ENCODE measurements at regions of chr10 and their contacts with region 1.

Region 1: GRCh38 chr10:530717-531116 is 158.8 kb downstream of the DIP2C start:
- DNase-seq: peak in 4 of 14 experiments; percentile 17 to 39 (median 21)
- ATAC-seq: no peak
- H3K4me3 ChIP-seq: no peak overlapping the region
- H3K4me3 Mint-ChIP-seq: no peak overlapping the region
- H3K27ac ChIP-seq: no peak overlapping the region
- H3K27ac Mint-ChIP-seq: no peak overlapping the region
- H3K4me1 ChIP-seq: no peaks in the 10 kb centered on the region
- H3K4me1 Mint-ChIP-seq: no peaks in the 10 kb centered on the region
- H3K27me3 ChIP-seq: no peaks in the 10 kb centered on the region
- H3K27me3 Mint-ChIP-seq: peaks cover 7% of the 10 kb centered on the region
- CTCF ChIP-seq: no peak

Region 2: GRCh38 chr10:176677-177076 is 354.0 kb before region 1 on chr10:
- CTCF ChIA-PET with region 1: no interaction called
- POLR2A ChIA-PET with region 1: no interaction called
- intact Hi-C with region 1: loop called in 1 of 2 experiments (anchors 2 kb)
- DNase-seq: no peak
- ATAC-seq: no peak
- H3K4me3 ChIP-seq: no peak overlapping the region
- H3K4me3 Mint-ChIP-seq: no peak overlapping the region
- H3K27ac ChIP-seq: no peak overlapping the region
- H3K27ac Mint-ChIP-seq: peak overlapping the region; percentile 5
- H3K4me1 ChIP-seq: no peaks in the 10 kb centered on the region
- H3K4me1 Mint-ChIP-seq: peaks cover 10% of the 10 kb centered on the region
- H3K27me3 ChIP-seq: no peaks in the 10 kb centered on the region
- H3K27me3 Mint-ChIP-seq: no peaks in the 10 kb centered on the region
- CTCF ChIP-seq: no peak

Region 3: DNA sequence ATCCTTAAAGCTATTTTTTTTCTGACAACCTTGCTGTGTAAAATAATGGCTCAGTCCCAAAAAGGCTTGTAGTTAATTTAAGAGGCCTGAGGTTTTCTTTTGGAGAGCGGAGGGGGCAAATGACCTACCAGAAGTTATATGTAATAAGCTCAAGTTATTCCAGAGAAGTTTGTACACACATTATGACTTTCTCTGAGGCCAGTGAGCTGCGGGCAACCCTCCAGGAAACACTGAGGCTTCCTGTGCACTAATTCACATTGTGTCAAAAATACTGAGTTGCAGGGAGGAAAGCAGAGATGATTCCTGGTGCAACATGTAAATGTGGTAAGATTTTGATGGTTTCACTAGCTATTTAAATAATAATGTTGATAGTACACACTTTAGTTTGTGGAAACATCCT is 29.8 kb before region 1 on chr10:
- CTCF ChIA-PET with region 1: no interaction called
- POLR2A ChIA-PET with region 1: no interaction called
- intact Hi-C with region 1: no loop called
- DNase-seq: peak in 3 of 14 experiments; percentile 11 to 43 (median 22)
- ATAC-seq: no peak
- H3K4me3 ChIP-seq: no peak overlapping the region
- H3K4me3 Mint-ChIP-seq: peak overlapping the region; percentile 54
- H3K27ac ChIP-seq: no peak overlapping the region
- H3K27ac Mint-ChIP-seq: peak overlapping the region; percentile 47
- H3K4me1 ChIP-seq: peaks cover 20% of the 10 kb centered on the region
- H3K4me1 Mint-ChIP-seq: peaks cover 31% of the 10 kb centered on the region
- H3K27me3 ChIP-seq: no peaks in the 10 kb centered on the region
- H3K27me3 Mint-ChIP-seq: peaks cover 11% of the 10 kb centered on the region
- CTCF ChIP-seq: no peak

Region 4: GRCh38 chr10:1544929-1545328 is 1014.2 kb after region 1 on chr10:
- CTCF ChIA-PET with region 1: no interaction called
- POLR2A ChIA-PET with region 1: no interaction called
- intact Hi-C with region 1: no loop called
- DNase-seq: no peak
- ATAC-seq: no peak
- H3K4me3 ChIP-seq: no peak overlapping the region
- H3K4me3 Mint-ChIP-seq: no peak overlapping the region
- H3K27ac ChIP-seq: no peak overlapping the region
- H3K27ac Mint-ChIP-seq: no peak overlapping the region
- H3K4me1 ChIP-seq: no peaks in the 10 kb centered on the region
- H3K4me1 Mint-ChIP-seq: no peaks in the 10 kb centered on the region
- H3K27me3 ChIP-seq: no peaks in the 10 kb centered on the region
- H3K27me3 Mint-ChIP-seq: no peaks in the 10 kb centered on the region
- CTCF ChIP-seq: no peak

Measured in CD4-positive, alpha-beta T cell (primary cell).